Naive thymus-derived CD8-positive, alpha-beta T cell (primary cell): ENCODE measurements at regions of chr1 and their contacts with region 1.

Region 1: DNA sequence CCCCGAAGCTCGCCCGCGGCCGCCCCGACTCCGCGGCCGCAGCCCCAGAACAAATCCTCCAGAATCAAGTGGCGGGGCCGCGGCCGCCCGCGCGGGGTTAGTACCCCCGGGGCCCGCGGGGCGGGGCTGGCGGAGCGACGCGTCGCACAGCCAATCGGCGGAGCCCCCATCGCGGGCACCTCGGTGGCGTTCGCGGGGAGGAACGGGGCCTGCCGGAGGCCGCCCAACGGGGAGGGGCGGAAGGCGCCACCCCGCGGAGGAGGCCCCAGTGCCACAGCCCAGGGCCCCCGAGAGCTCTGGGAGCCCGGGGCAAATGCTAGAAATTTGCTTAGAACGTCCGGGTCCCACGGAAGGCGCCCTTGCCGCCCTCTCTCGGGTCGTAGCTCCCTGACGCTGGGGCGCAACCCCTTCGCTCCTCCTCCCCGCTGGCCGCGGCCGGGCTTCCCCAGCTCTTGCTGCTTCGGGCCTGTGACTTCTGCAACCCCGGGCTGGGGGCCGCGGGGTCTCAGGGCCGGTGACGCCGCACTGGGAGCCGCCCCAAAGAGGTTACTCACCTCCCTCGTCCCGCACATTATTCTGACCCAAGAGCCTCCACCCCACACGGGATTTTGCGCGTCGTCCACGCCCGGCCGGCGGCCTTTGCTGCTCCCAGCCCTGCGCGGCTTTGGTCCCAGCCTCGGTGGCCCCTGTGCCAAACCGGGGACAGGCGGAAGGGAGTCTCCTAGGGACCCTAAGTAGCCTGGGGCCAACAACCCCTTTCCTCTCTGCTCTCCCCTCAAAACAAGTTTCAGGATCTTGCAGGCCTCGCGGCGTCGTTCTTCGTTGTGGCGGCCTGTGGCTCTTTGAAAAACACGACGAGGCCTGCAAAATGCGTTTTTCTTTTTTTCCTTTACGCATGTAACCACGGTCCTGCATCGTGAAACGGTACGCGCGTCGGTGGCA is at the start of gene RUNX3:
- DNase-seq: peak; percentile 86 to 96 (median 94)
- ATAC-seq: peak; percentile 82 to 83
- H3K4me3 Mint-ChIP-seq: peak within 1 kb of the TSS; percentile 89 to 99 (median 98)
- H3K27ac Mint-ChIP-seq: peak within 1 kb of the TSS; percentile 88 to 100 (median 98)
- H3K4me1 Mint-ChIP-seq: peaks cover 29 to 69% (median 64%) of the 10 kb centered on the region in 4 donors
- H3K27me3 Mint-ChIP-seq: no peaks in the 10 kb centered on the region
- polyA plus RNA-seq, gene RUNX3: 22.0 to 64.0 (median 54.0) TPM

Region 2: DNA sequence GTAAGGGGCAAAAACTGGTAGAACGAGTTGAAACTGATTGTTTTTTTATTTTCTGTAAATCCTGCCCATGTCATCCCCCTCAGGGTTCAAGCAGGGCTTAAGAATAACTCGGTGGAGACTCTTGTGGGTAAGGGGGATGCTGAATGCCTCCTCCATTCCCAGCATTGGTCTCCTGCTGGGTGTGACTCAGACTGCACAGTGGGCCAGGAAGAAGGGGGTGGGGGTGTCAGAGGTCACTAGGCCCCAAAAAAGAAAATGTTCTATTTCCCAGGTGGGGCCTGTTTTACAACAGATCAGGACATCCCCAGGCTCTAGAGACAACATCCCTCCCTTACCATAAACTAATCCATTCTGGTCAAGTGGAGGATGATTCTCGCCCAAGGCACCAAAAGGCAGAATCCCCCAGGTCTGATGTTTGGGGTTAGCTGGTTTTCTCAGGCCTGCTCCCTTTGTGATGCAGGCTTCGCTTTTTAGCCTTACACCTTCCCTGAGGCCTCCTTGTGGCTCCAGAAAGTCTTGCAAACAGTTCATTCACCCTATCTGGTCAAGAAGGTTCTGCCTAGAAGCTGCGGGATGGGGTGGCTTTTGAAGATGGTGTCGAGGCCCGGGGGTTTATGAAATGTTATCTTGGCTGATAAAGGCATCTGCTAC is 622.0 kb before region 1 on chr1:
- POLR2A ChIA-PET with region 1: no interaction called
- DNase-seq: no peak
- ATAC-seq: no peak
- H3K4me3 Mint-ChIP-seq: no peak overlapping the region
- H3K27ac Mint-ChIP-seq: no peak overlapping the region
- H3K4me1 Mint-ChIP-seq: peaks cover 0 to 2% (median 0%) of the 10 kb centered on the region in 4 donors
- H3K27me3 Mint-ChIP-seq: peaks cover 6 to 16% (median 11%) of the 10 kb centered on the region in 5 donors

Region 3: GRCh38 chr1:24847995-24848881 is 82.2 kb before region 1 on chr1:
- POLR2A ChIA-PET with region 1: interaction called, 45 read pairs
- DNase-seq: peak; percentile 79 to 95 (median 88)
- ATAC-seq: peak; percentile 94 to 95
- H3K4me3 Mint-ChIP-seq: peak overlapping the region; percentile 66 to 82 (median 78)
- H3K27ac Mint-ChIP-seq: peak overlapping the region in 9 of 10 donors; percentile 53 to 89 (median 80)
- H3K4me1 Mint-ChIP-seq: peaks cover 2 to 36% (median 18%) of the 10 kb centered on the region in 4 donors
- H3K27me3 Mint-ChIP-seq: peaks cover 0 to 1% (median 0%) of the 10 kb centered on the region in 5 donors

Region 4: DNA sequence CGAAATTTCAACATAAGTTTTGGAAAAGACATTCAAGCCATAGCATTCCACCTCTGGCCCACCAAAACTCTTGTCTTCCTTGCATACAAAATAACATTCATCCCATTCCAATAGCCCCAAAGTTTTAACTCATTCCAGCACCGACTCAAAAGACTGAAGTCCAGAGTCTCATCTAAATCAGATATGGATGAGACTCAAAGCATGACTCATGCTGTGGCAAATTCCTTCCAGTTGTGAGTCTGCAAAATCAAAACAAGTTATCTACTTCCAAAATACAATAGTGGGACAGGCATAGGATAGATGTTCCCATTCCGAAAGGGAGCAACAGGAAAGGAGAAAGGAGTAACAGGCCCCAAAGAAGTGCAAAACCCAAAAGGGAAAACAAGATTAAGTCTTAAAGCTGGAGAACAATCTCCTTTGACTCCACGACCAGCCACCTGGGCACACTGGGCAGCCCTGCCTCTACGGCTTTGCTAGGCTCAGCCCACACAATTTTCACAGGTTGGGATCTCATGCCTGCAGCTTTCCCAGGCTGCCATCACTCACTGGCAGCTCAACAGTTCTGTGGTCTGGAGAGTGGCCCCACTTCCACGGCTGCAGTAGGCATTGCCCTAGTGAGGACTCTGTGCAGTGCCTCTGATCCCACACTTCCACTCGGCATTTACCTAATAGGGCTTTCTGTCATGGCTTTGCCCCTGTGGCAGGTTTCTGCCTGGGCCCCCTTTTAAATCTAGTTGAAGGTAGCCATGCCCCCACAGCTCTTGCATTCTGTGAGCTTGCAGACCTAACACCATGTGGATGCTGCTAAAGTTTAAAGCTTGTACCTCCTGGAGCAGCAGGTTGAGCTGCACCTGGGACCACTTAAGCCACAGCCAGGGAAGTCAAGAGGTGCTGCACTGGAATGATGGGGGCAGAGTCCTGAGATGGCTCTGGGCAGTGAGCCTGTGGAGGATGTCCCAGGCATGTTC is 51.4 kb before region 1 on chr1:
- POLR2A ChIA-PET with region 1: no interaction called
- DNase-seq: no peak
- ATAC-seq: no peak
- H3K4me3 Mint-ChIP-seq: no peak overlapping the region
- H3K27ac Mint-ChIP-seq: no peak overlapping the region
- H3K4me1 Mint-ChIP-seq: no peaks in the 10 kb centered on the region
- H3K27me3 Mint-ChIP-seq: peaks cover 0 to 5% (median 0%) of the 10 kb centered on the region in 5 donors

Region 5: DNA sequence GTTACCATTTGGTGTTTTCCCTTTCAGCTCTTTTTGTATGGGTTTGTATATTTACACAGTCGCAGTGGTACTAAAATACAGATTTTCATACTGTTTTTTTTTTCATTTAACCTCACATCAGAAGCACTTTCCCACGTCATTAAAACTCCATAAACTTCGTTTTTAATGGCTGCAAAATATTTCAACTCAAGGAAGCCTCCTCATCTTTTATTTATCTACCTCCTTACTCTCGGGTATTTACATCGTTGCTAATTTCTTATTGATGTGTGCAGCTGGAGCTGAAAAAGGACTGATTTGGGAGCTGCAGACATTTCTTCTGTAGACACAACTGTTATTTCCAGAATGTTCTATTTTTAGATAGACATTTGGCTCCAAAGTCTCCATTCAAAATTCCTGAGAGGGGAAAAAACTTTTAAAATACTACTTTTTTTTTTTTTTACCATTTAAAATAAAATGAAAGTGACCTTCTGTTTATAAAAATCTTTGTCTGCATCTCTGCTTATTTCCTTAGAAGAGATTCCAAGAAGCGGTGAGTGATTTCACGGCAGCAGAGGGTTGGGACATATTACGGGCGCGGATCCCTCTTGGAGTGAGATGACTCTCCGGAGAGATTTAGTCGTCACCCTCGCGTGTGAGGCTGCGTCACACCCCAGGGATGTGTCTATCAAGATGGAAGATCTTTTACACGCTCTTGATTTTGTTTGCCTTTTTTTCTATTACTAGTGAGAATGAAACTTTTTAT is 10.5 kb before region 1 on chr1:
- POLR2A ChIA-PET with region 1: interaction called, 290 read pairs
- DNase-seq: no peak
- ATAC-seq: no peak
- H3K4me3 Mint-ChIP-seq: peak overlapping the region in 4 of 10 donors; percentile 38 to 65 (median 56)
- H3K27ac Mint-ChIP-seq: peak overlapping the region; percentile 15 to 100 (median 84)
- H3K4me1 Mint-ChIP-seq: peaks cover 33 to 91% (median 87%) of the 10 kb centered on the region in 4 donors
- H3K27me3 Mint-ChIP-seq: no peaks in the 10 kb centered on the region

Region 6: DNA sequence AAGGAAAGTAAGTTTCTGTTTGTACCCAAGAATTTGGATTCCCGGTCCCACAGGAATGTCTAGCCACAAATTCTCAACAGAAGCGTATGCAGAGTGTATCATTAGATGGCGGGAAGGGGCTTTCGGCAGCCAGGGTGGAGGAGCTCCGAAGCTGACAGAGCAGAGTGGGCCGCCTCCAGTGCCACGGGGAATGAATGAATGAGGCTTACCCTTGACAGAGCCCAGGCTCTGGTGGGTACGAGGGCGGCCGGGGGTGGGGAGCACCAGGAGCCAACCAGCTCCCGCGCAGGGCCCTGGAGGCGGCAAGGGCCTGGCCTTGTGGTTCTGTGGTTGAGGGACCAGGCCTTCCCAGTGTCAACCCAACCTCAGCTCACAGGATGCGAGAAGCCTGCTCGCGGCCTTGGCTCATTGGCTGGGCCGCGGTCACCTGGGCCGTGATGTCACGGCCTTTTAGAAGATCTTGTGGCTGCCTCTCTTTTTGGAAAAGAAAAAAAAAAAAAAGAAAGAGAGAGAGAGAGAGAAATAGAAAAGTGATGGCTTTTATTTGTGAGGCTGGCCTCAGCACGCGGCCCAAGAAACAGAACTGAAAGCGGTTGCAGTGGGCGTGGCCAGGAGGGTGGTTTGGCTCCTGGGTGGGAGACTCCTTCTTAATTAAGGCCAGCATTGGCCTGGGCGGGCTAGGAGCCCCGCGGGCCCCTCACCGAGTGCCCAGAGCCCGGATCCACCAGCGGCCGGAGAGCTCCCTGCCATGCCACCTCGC is 34.5 kb after region 1 on chr1:
- POLR2A ChIA-PET with region 1: interaction called, 95 read pairs
- DNase-seq: peak; percentile 71 to 96 (median 92)
- ATAC-seq: peak; percentile 84 to 93
- H3K4me3 Mint-ChIP-seq: peak overlapping the region; percentile 86 to 97 (median 93)
- H3K27ac Mint-ChIP-seq: peak overlapping the region; percentile 95 to 98 (median 96)
- H3K4me1 Mint-ChIP-seq: peaks cover 40 to 81% (median 77%) of the 10 kb centered on the region in 4 donors
- H3K27me3 Mint-ChIP-seq: no peaks in the 10 kb centered on the region

Region 7: GRCh38 chr1:25031966-25032667 is 101.6 kb after region 1 on chr1:
- POLR2A ChIA-PET with region 1: interaction called, 105 read pairs
- DNase-seq: peak in 9 of 10 donors; percentile 54 to 86 (median 68)
- ATAC-seq: peak; percentile 58 to 88
- H3K4me3 Mint-ChIP-seq: peak overlapping the region; percentile 54 to 81 (median 69)
- H3K27ac Mint-ChIP-seq: peak overlapping the region in 8 of 10 donors; percentile 95 to 98 (median 96)
- H3K4me1 Mint-ChIP-seq: peaks cover 6 to 73% (median 42%) of the 10 kb centered on the region in 4 donors
- H3K27me3 Mint-ChIP-seq: no peaks in the 10 kb centered on the region

Region 8: GRCh38 chr1:25232027-25232865 is 301.8 kb after region 1 on chr1 and contains the start of gene SYF2:
- POLR2A ChIA-PET with region 1: interaction called, 13 read pairs
- DNase-seq: peak; percentile 81 to 97 (median 92)
- ATAC-seq: peak; percentile 89 to 92
- H3K4me3 Mint-ChIP-seq: no peak within 1 kb of the TSS
- H3K27ac Mint-ChIP-seq: no peak within 1 kb of the TSS
- H3K4me1 Mint-ChIP-seq: peaks cover 8 to 51% (median 30%) of the 10 kb centered on the region in 4 donors
- H3K27me3 Mint-ChIP-seq: no peaks in the 10 kb centered on the region
- polyA plus RNA-seq, gene SYF2: 69.1 to 78.6 (median 75.2) TPM